CD8-positive, alpha-beta T cell (primary cell): ENCODE measurements at regions of chrX and their contacts with region 1.

Region 1: GRCh38 chrX:107776649-107777535 is 641 bp upstream of the NCBP2L start:
- DNase-seq: peak; percentile 38 to 88 (median 77)
- ATAC-seq: peak; percentile 66
- H3K4me3 ChIP-seq: peak overlapping the region; percentile 63 to 70
- H3K4me3 Mint-ChIP-seq: peak overlapping the region; percentile 89
- H3K27ac ChIP-seq: peak overlapping the region; percentile 56 to 71
- H3K27ac Mint-ChIP-seq: peak overlapping the region; percentile 90
- H3K4me1 ChIP-seq: peaks cover 10% of the 10 kb centered on the region
- H3K4me1 Mint-ChIP-seq: peaks cover 24% of the 10 kb centered on the region
- H3K27me3 ChIP-seq: no peaks in the 10 kb centered on the region
- H3K27me3 Mint-ChIP-seq: no peaks in the 10 kb centered on the region
- CTCF ChIP-seq: peak; percentile 50

Region 2: GRCh38 chrX:107025545-107025944 is 751.3 kb before region 1 on chrX:
- CTCF ChIA-PET with region 1: no interaction called
- POLR2A ChIA-PET with region 1: no interaction called
- intact Hi-C with region 1: loop called in 1 of 2 experiments (anchors 10 kb)
- DNase-seq: peak in 2 of 9 experiments; percentile 15 to 30
- ATAC-seq: no peak
- H3K4me3 ChIP-seq: no peak overlapping the region
- H3K4me3 Mint-ChIP-seq: no peak overlapping the region
- H3K27ac ChIP-seq: no peak overlapping the region
- H3K27ac Mint-ChIP-seq: no peak overlapping the region
- H3K4me1 ChIP-seq: no peaks in the 10 kb centered on the region
- H3K4me1 Mint-ChIP-seq: no peaks in the 10 kb centered on the region
- H3K27me3 ChIP-seq: no peaks in the 10 kb centered on the region
- H3K27me3 Mint-ChIP-seq: peaks cover 4% of the 10 kb centered on the region
- CTCF ChIP-seq: no peak

Region 3: GRCh38 chrX:107537815-107538214 is 239.1 kb before region 1 on chrX:
- CTCF ChIA-PET with region 1: interaction called, 3 read pairs
- POLR2A ChIA-PET with region 1: no interaction called
- intact Hi-C with region 1: loop called (anchors 1 to 5 kb)
- DNase-seq: peak in 4 of 9 experiments; percentile 25 to 51 (median 39)
- ATAC-seq: no peak
- H3K4me3 ChIP-seq: no peak overlapping the region
- H3K4me3 Mint-ChIP-seq: no peak overlapping the region
- H3K27ac ChIP-seq: no peak overlapping the region
- H3K27ac Mint-ChIP-seq: no peak overlapping the region
- H3K4me1 ChIP-seq: no peaks in the 10 kb centered on the region
- H3K4me1 Mint-ChIP-seq: no peaks in the 10 kb centered on the region
- H3K27me3 ChIP-seq: no peaks in the 10 kb centered on the region
- H3K27me3 Mint-ChIP-seq: peaks cover 9% of the 10 kb centered on the region
- CTCF ChIP-seq: no peak

Region 4: GRCh38 chrX:107672955-107673378 is 103.9 kb before region 1 on chrX:
- CTCF ChIA-PET with region 1: interaction called, 41 read pairs
- POLR2A ChIA-PET with region 1: interaction called, 48 read pairs
- intact Hi-C with region 1: loop called (anchors 1 kb)
- DNase-seq: peak; percentile 60 to 94 (median 84)
- ATAC-seq: peak; percentile 59
- H3K4me3 ChIP-seq: peak overlapping the region; percentile 10 to 13
- H3K4me3 Mint-ChIP-seq: peak overlapping the region; percentile 67
- H3K27ac ChIP-seq: peak overlapping the region; percentile 97 to 98
- H3K27ac Mint-ChIP-seq: peak overlapping the region; percentile 99
- H3K4me1 ChIP-seq: peaks cover 41% of the 10 kb centered on the region
- H3K4me1 Mint-ChIP-seq: peaks cover 47% of the 10 kb centered on the region
- H3K27me3 ChIP-seq: no peaks in the 10 kb centered on the region
- H3K27me3 Mint-ChIP-seq: no peaks in the 10 kb centered on the region
- CTCF ChIP-seq: peak; percentile 52

Region 5: DNA sequence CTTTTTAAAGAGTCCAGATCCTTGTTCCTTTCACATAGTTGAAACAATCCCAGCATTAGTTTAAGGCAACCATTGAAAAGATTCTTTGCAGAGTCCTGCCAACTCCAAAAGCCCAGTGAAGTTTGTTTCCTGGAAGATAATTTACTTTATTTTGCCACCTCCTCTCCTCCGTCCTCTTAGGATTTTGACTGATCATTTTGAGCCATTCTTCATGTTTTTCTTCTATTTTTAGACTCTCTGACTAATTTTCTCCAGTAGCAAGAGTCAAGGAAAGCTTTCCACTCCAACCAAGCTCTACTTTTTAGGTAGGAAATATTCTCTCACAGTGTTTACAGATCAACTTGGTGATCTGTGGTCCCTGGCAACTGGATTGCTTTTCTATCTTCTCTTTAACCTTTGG is 10.9 kb after region 1 on chrX:
- CTCF ChIA-PET with region 1: interaction called, 12 read pairs
- POLR2A ChIA-PET with region 1: no interaction called
- intact Hi-C with region 1: no loop called
- DNase-seq: no peak
- ATAC-seq: no peak
- H3K4me3 ChIP-seq: no peak overlapping the region
- H3K4me3 Mint-ChIP-seq: no peak overlapping the region
- H3K27ac ChIP-seq: no peak overlapping the region
- H3K27ac Mint-ChIP-seq: no peak overlapping the region
- H3K4me1 ChIP-seq: no peaks in the 10 kb centered on the region
- H3K4me1 Mint-ChIP-seq: no peaks in the 10 kb centered on the region
- H3K27me3 ChIP-seq: no peaks in the 10 kb centered on the region
- H3K27me3 Mint-ChIP-seq: peaks cover 6% of the 10 kb centered on the region
- CTCF ChIP-seq: no peak

Region 6: DNA sequence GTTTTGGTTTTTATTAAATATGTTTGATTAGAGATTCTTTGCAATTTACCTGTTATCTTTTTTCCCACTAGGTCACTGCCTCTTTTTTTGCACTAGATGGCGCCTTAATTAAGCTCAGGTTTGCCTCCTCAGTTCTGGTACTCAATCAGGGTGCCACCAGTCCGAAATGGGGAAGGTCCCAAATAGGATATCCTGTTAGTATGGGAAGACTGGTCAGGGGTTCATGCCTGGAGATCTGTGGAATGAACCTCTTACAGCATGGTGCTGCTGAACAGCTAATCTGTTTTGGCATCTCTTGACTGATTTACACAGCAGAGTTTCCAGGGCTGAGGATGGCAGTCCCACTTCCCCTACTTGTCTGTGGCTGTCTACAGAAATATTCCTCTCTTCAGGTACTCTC is 243.7 kb after region 1 on chrX:
- CTCF ChIA-PET with region 1: no interaction called
- POLR2A ChIA-PET with region 1: no interaction called
- intact Hi-C with region 1: loop called in 1 of 2 experiments (anchors 5 kb)
- DNase-seq: peak in 5 of 9 experiments; percentile 0 to 51 (median 28)
- ATAC-seq: no peak
- H3K4me3 ChIP-seq: peak overlapping the region in 1 of 2 experiments; percentile 17
- H3K4me3 Mint-ChIP-seq: peak overlapping the region; percentile 83
- H3K27ac ChIP-seq: peak overlapping the region; percentile 10 to 19
- H3K27ac Mint-ChIP-seq: peak overlapping the region; percentile 97
- H3K4me1 ChIP-seq: peaks cover 45% of the 10 kb centered on the region
- H3K4me1 Mint-ChIP-seq: peaks cover 70% of the 10 kb centered on the region
- H3K27me3 ChIP-seq: no peaks in the 10 kb centered on the region
- H3K27me3 Mint-ChIP-seq: no peaks in the 10 kb centered on the region
- CTCF ChIP-seq: no peak